ENCODE measurements at regions of chr2 and their contacts with region 1.

Region 1: GRCh38 chr2:9373077-9373875 is 50.1 kb downstream of the ITGB1BP1 start:
- DNase-seq: no peak
- ATAC-seq: no peak
- H3K4me3 ChIP-seq: no peak overlapping the region
- H3K27ac ChIP-seq: no peak overlapping the region
- H3K4me1 ChIP-seq: peaks cover 0 to 20% (median 15%) of the 10 kb centered on the region in 9 donors
- H3K27me3 ChIP-seq: no peaks in the 10 kb centered on the region
- CTCF ChIP-seq: no peak

Region 2: DNA sequence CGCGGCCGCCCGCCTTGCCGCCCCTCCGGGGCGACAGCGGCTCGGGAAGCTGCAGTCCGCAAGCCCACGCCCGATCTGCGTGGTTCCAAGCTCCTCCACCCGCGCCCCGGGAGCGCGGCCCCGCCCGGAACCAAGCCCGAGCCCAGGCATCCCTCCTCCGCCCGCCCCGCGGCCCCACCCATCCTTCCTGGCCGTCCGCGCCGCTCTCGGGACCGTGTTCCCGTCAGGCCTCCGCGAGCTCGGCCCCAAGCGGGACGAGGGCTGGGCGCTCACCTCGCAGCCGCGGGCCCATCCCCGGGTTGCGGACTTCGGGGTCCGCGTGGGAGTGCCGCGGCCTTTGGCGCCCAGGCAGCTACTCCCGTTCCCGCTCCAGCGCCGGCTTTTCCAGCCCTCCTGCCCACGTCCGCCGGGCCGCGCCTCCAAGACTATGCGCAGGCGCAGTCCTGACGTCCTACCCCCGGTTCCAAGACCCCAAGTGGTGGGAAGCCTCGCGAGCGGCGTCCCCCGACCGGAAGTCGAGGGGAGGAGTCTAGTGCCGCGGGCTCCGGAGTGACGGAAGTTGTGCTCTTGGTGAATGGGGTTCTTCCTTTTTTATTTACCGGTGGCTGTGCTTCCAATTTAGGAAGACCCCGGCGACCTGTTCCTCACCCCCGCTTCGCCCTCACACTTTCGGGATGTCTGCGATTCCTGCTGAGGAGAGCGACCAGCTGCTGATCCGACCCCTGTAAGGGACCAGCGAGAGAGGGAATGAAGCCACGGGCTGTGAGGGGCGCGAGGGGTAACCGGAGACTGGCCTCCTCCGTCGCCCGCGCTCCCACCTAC is 50.0 kb after region 1 on chr2 and contains the starts of genes CPSF3 and ITGB1BP1:
- intact Hi-C with region 1: loop called in 1 of 10 experiments (anchors 2 kb)
- DNase-seq: peak; percentile 98 to 99
- ATAC-seq: peak; percentile 95 to 98 (median 97)
- H3K4me3 ChIP-seq: peak within 1 kb of the TSS; percentile 49 to 96 (median 91)
- H3K27ac ChIP-seq: peak within 1 kb of the TSS; percentile 59 to 97 (median 95)
- H3K4me1 ChIP-seq: peaks cover 6 to 54% (median 41%) of the 10 kb centered on the region in 9 donors
- H3K27me3 ChIP-seq: no peaks in the 10 kb centered on the region
- CTCF ChIP-seq: peak in 4 of 9 donors; percentile 16 to 22 (median 20)
- total RNA-seq, gene CPSF3: 12.8 to 19.8 (median 16.5) TPM
- total RNA-seq, gene ITGB1BP1: 51.4 to 224 (median 134) TPM

Region 3: DNA sequence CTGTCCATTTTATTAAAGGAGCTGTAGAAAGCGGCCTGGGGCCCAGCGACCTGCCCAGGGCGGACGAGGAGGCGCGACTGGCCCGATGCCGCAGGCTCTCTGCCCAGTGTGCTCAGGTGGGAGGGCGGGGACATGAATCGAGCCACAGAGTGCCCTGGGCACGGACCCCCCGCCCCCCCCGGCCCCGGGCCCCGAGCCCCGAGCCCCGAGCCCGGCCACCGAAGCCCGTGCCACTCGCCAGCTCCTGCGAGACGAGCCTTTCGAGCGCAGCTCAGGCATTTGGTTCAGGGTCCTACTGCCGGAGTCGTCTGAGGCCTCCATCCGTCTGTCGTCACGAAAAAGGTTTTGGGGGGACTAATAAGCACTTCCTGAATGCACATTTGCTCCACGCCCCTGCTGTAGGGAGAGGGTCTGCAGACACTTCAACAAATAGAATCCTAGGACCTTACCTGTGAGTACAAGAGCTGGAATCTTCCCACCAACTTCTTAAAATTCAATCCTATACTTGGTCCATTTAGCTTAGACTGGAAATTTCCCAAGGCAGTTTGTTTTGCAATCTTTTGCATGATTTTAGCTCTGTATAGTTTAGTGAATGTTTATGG is 183.0 kb after region 1 on chr2:
- intact Hi-C with region 1: no loop called
- DNase-seq: no peak
- ATAC-seq: peak in 7 of 8 donors; percentile 40 to 83 (median 63)
- H3K4me3 ChIP-seq: peak overlapping the region; percentile 69 to 95 (median 86)
- H3K27ac ChIP-seq: peak overlapping the region; percentile 95 to 100 (median 99)
- H3K4me1 ChIP-seq: peaks cover 4 to 52% (median 45%) of the 10 kb centered on the region in 9 donors
- H3K27me3 ChIP-seq: no peaks in the 10 kb centered on the region
- CTCF ChIP-seq: no peak

Measured in heart right ventricle (tissue), 16 donors.